Adrenal gland (tissue), 19 donors: ENCODE measurements at regions of chr2 and their contacts with region 1.

Region 1: DNA sequence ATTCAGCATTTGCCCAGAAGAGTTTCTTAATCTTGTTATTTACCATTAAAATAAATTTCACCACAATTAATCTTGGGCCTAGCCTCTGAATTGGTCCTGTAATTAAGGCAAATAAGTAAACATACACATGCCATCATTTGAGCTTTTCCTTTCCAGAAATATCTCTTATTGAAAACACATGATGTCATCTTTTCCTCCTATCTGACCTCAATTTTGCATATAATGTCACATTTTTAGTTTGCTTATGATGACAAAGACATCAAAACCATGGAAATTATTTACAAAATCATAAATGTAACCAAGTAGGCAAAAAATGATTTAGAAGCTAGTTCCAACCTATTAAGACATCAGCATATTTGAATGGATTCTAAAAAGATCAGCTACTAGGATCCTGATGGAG is 915.5 kb downstream of the ERBB4 start:
- DNase-seq: no peak
- H3K4me3 ChIP-seq: no peak overlapping the region
- H3K27ac ChIP-seq: no peak overlapping the region
- H3K4me1 ChIP-seq: no peaks in the 10 kb centered on the region
- H3K27me3 ChIP-seq: no peaks in the 10 kb centered on the region
- CTCF ChIP-seq: no peak
- POLR2A ChIP-seq: no peak

Region 2: DNA sequence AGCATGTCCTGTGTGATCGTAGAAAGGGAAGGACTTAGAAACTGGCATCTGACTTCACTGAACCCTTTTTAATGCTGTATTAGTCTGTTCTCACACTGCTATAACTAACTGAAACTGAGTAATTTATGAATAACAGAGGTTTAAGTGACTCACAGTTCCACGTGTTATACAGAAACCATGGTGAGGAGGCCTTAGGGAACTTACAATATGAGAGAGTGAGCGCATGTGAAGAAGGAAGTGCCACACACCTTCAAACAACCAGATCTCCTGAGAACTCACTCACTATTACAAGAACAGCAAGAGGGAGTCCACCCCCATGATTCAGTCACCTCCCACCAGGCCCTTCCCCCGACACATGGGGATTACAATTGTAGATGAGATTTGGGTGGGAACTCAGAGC is 255.4 kb before region 1 on chr2:
- intact Hi-C with region 1: no loop called
- DNase-seq: no peak
- H3K4me3 ChIP-seq: no peak overlapping the region
- H3K27ac ChIP-seq: no peak overlapping the region
- H3K4me1 ChIP-seq: no peaks in the 10 kb centered on the region
- H3K27me3 ChIP-seq: no peaks in the 10 kb centered on the region
- CTCF ChIP-seq: no peak
- POLR2A ChIP-seq: no peak

Region 3: DNA sequence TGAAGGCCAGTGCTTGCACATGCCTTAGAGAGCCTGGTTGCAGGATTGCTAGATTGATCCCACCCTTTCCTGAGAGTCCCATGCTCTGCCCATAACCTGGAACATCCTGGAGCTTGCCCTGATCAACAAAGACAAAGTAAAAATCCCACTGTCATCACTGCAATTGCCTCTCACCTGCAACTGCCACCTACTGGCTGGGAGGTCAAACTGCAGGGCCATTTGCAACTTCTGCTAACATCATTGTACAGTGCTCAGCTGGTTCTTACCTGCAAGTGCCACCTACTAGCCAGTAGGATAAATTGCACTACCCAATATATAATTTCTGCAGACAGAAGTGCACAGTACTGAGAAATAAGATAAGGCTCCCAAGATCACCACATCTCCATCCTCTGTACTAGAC is 119.2 kb before region 1 on chr2:
- intact Hi-C with region 1: no loop called
- DNase-seq: no peak
- H3K4me3 ChIP-seq: no peak overlapping the region
- H3K27ac ChIP-seq: no peak overlapping the region
- H3K4me1 ChIP-seq: no peaks in the 10 kb centered on the region
- H3K27me3 ChIP-seq: no peaks in the 10 kb centered on the region
- CTCF ChIP-seq: no peak
- POLR2A ChIP-seq: no peak

Region 4: DNA sequence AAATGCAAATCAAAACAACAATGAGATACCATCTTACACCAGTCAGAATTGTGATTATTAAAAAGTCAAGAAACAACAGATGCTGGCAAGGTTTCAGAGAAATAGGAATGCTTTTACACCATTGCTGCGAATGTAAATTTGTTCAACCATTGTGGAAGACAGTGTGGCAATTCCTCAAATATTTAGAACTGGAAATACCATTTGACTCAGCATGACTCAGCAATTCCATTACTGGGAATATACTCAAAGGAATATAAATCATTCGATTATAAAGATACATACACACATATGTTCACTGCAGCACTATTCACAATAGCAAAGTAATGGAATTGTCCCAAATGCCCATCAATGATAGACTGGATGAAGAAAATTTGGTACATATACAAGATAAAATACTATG is 398.9 kb after region 1 on chr2:
- intact Hi-C with region 1: loop called in 1 of 2 experiments (anchors 5 kb)
- DNase-seq: no peak
- H3K4me3 ChIP-seq: no peak overlapping the region
- H3K27ac ChIP-seq: no peak overlapping the region
- H3K4me1 ChIP-seq: no peaks in the 10 kb centered on the region
- H3K27me3 ChIP-seq: no peaks in the 10 kb centered on the region
- CTCF ChIP-seq: no peak
- POLR2A ChIP-seq: no peak

Region 5: DNA sequence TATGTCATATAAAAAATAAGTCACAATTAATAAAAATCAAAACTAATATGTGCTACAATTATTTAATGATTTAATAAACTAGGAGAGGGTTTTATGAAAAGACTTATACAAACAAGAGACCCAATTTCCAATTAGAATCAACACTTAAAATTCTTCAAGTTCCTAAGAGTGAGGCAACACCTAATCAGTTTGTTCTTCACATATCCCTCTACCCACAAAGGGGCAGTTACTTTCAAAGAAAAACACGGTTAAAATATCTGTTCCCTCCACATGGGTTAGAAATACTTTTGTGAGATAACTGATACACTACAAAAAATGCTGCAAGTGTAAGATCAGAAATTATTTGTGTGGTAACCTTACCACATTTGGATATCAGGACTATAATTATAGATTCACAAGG is 558.5 kb after region 1 on chr2:
- intact Hi-C with region 1: no loop called
- DNase-seq: no peak
- H3K4me3 ChIP-seq: no peak overlapping the region
- H3K27ac ChIP-seq: no peak overlapping the region
- H3K4me1 ChIP-seq: no peaks in the 10 kb centered on the region
- H3K27me3 ChIP-seq: no peaks in the 10 kb centered on the region
- CTCF ChIP-seq: no peak
- POLR2A ChIP-seq: no peak

Region 6: GRCh38 chr2:212330263-212330662 is 707.2 kb after region 1 on chr2:
- intact Hi-C with region 1: no loop called
- DNase-seq: no peak
- H3K4me3 ChIP-seq: no peak overlapping the region
- H3K27ac ChIP-seq: no peak overlapping the region
- H3K4me1 ChIP-seq: no peaks in the 10 kb centered on the region
- H3K27me3 ChIP-seq: no peaks in the 10 kb centered on the region
- CTCF ChIP-seq: no peak
- POLR2A ChIP-seq: no peak